Activated CD4-positive, alpha-beta memory T cell treated with anti-CD3 and anti-CD28 coated beads for 36 hours (primary cell): ENCODE measurements at regions of chr12 and their contacts with region 1.

Region 1: DNA sequence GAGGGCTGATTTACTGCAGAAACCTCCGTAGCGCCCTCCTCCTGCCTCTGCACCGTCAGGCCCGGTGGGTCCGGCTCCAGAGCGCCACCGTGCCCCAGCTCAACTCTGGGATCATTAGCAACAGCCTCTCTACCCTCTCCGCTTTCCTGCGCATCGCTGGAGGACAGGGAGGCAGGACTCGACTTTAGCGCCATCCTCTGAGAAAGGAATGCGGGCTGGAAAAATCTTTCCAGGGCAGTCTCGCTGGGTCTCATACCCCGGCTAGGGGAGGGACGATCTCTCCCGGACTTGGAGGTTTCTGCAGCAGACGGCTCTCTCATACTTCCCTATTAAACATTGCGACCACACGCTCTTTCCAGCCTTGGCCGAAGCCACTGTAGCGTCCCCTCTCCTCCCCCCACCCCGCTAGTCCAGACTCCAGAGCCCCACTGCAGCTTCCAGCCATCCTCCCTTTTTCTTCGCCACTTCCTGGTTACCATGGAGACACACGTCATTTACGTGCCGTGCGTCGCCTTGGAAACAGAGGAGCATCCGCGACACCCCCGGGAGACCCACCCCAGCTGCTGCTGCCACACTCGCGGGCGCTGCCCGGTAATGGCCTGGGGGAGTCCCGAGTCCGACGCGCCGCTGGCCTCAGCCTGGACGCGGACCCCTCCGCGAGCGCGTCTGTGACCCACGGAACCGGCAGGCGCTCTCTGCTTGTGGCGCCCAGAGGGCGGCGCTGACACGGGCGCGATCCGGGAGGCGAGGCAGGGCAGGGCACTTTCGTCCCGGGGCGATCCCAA is at the start of gene CCDC184:
- DNase-seq: peak; percentile 82
- H3K4me3 Mint-ChIP-seq: peak within 1 kb of the TSS; percentile 92
- H3K27ac Mint-ChIP-seq: no peak within 1 kb of the TSS
- H3K4me1 Mint-ChIP-seq: peaks cover 19% of the 10 kb centered on the region
- H3K27me3 Mint-ChIP-seq: peaks cover 24% of the 10 kb centered on the region
- total RNA-seq, gene CCDC184: 0.36 to 0.40 TPM

Region 2: GRCh38 chr12:47705566-47706425 is 477.5 kb before region 1 on chr12 and contains the start of gene RPAP3:
- CTCF ChIA-PET with region 1: no interaction called
- POLR2A ChIA-PET with region 1: no interaction called
- intact Hi-C with region 1: loop called (anchors 10 kb)
- DNase-seq: peak; percentile 99
- H3K4me3 Mint-ChIP-seq: peak within 1 kb of the TSS; percentile 96
- H3K27ac Mint-ChIP-seq: peak within 1 kb of the TSS; percentile 95
- H3K4me1 Mint-ChIP-seq: peaks cover 50% of the 10 kb centered on the region
- H3K27me3 Mint-ChIP-seq: no peaks in the 10 kb centered on the region
- total RNA-seq, gene RPAP3: 49.4 to 50.2 TPM

Region 3: DNA sequence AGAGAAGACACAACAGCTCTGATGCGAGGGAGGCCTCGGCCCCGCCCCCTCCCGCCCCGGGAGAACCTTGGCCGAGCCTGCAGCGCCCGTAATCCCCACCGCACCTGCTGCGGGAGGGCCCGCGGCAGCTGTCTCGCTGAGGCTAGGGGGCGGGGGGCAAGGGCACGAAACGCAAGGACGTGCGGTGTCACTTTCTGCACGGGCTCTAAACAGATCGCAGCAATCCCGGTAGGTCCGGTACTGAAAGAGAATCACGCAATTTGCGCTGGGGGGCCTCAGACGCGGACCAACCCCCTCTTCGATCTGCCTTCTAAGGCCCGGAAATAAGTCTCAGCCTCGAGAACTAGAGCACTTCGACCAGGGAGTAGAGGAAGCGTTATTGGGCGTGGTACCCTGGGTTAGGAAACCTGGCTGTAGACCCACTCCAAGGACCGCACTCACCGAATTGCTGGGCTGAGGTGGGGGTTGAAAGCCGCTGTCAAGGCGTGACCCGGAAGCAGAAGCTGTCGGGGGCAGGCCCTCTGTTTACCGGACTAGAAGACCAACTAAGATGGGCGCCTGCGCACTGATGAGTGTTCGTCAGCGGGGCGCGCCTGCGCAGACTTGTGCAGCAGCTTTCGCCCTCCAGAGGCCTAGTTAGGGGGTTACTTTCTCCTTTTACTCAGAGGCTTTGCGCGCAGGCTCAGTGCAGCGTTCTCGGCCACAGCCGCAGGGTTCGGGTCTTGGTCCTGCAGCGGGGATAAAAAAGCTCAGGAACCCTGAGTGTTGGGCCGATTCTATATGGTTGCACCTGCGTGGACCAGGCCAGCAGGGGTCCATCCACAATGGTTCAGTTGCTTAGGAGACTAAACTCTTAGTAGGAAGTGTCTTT is 26.0 kb before region 1 on chr12 and contains the start of gene ASB8:
- CTCF ChIA-PET with region 1: interaction called, 16 read pairs
- POLR2A ChIA-PET with region 1: interaction called, 5 read pairs
- intact Hi-C with region 1: loop called (anchors 1 kb)
- DNase-seq: peak; percentile 100
- H3K4me3 Mint-ChIP-seq: peak within 1 kb of the TSS; percentile 94
- H3K27ac Mint-ChIP-seq: peak within 1 kb of the TSS; percentile 96
- H3K4me1 Mint-ChIP-seq: peaks cover 37% of the 10 kb centered on the region
- H3K27me3 Mint-ChIP-seq: no peaks in the 10 kb centered on the region
- total RNA-seq, gene ASB8: 31.4 to 33.6 TPM

Region 4: GRCh38 chr12:48165094-48165981 is 17.9 kb before region 1 on chr12:
- CTCF ChIA-PET with region 1: interaction called, 10 read pairs
- POLR2A ChIA-PET with region 1: no interaction called
- intact Hi-C with region 1: no loop called
- DNase-seq: peak; percentile 49
- H3K4me3 Mint-ChIP-seq: no peak overlapping the region
- H3K27ac Mint-ChIP-seq: peak overlapping the region; percentile 3
- H3K4me1 Mint-ChIP-seq: no peaks in the 10 kb centered on the region
- H3K27me3 Mint-ChIP-seq: peaks cover 4% of the 10 kb centered on the region

Region 5: DNA sequence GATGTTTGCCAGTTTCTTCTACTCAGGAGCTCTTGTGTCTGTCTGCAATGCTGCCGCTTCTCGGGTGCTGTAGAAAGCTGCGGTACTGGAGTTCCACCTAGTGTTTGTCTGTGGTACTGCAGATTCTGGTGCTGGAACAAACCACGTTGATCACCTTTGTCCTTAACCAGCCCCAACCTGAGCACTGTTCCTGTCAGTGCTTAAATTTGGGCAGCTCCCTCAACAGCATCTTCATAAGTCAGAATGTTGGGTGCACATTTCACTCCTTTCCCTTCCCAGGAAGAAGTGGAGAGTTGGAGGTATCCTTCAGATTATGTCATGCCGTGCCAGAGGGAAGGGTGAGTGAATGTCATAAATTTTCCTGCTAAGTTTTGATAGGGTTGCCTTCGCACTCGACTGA is 435.3 kb after region 1 on chr12:
- CTCF ChIA-PET with region 1: interaction called, 7 read pairs
- POLR2A ChIA-PET with region 1: no interaction called
- intact Hi-C with region 1: loop called (anchors 5 kb)
- DNase-seq: peak; percentile 83
- H3K4me3 Mint-ChIP-seq: no peak overlapping the region
- H3K27ac Mint-ChIP-seq: no peak overlapping the region
- H3K4me1 Mint-ChIP-seq: no peaks in the 10 kb centered on the region
- H3K27me3 Mint-ChIP-seq: peaks cover 22% of the 10 kb centered on the region